ENCODE measurements at regions of chr1 and their contacts with region 1.

Region 1: DNA sequence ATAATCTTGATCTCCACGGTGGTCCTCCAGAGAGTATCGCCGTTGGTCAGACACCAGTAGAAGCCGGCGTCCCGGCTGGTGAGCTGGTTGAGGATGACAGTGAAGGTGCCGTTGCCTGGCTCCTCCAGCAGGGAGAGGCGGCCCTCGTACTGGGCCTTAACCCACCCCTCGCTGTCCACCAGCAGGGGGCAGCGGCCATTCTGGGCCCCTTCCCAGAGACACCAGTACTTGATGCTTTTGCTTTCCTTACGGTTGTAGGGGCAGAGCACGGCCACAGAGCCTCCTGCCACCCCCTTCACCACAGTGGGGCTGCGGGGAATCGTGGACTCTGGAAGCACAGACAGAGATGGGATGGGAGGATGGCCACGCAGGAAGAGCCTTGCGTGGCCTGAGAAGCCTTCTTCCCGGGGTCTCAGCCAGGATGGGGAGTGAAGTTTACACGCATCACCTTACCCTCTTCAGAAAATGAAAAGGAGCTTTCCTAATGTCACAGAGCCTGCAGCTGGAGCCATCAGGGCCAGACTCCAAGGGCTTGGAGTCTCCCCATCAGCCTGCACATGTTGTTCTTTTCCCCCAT is 10.7 kb downstream of the PIGR start:
- DNase-seq: no peak
- ATAC-seq: peak; percentile 64
- H3K4me3 ChIP-seq: no peak overlapping the region
- H3K27ac ChIP-seq: no peak overlapping the region
- H3K4me1 ChIP-seq: peaks cover 27% of the 10 kb centered on the region
- H3K27me3 ChIP-seq: no peaks in the 10 kb centered on the region
- CTCF ChIP-seq: peak; percentile 44 to 71 (median 57)
- EP300 ChIP-seq: no peak
- POLR2A ChIP-seq: no peak
- RAD21 ChIP-seq: peak; percentile 36; the same call in 1 of the 2 replicates

Region 2: GRCh38 chr1:206489980-206490770 is 445.4 kb before region 1 on chr1:
- CTCF ChIA-PET with region 1: no interaction called
- POLR2A ChIA-PET with region 1: no interaction called
- RAD21 ChIA-PET with region 1: no interaction called
- SMC1A ChIA-PET with region 1: no interaction called
- in situ Hi-C with region 1: no loop called
- intact Hi-C with region 1: no loop called
- DNase-seq: no peak
- ATAC-seq: peak; percentile 99
- H3K4me3 ChIP-seq: no peak overlapping the region
- H3K27ac ChIP-seq: no peak overlapping the region
- H3K4me1 ChIP-seq: peaks cover 5% of the 10 kb centered on the region
- H3K27me3 ChIP-seq: no peaks in the 10 kb centered on the region
- CTCF ChIP-seq: peak; percentile 91 to 97 (median 96)
- EP300 ChIP-seq: no peak
- POLR2A ChIP-seq: no peak
- RAD21 ChIP-seq: peak; percentile 97

Region 3: GRCh38 chr1:206635080-206635977 is 300.2 kb before region 1 on chr1 and contains the start of gene DYRK3:
- CTCF ChIA-PET with region 1: interaction called, 9 read pairs
- POLR2A ChIA-PET with region 1: no interaction called
- RAD21 ChIA-PET with region 1: interaction called, 12 read pairs
- SMC1A ChIA-PET with region 1: interaction called, 3 read pairs
- in situ Hi-C with region 1: no loop called
- intact Hi-C with region 1: no loop called
- DNase-seq: peak; percentile 71
- ATAC-seq: peak; percentile 92
- H3K4me3 ChIP-seq: peak within 1 kb of the TSS; percentile 94
- H3K27ac ChIP-seq: peak within 1 kb of the TSS; percentile 62
- H3K4me1 ChIP-seq: peaks cover 26% of the 10 kb centered on the region
- H3K27me3 ChIP-seq: no peaks in the 10 kb centered on the region
- CTCF ChIP-seq: 0 out of 6 replicates have a peak, but pooled peaks of 1 of the 3 experiments have one; percentile 5
- EP300 ChIP-seq: 0 out of 4 replicates have a peak, but pooled peaks of 1 of the 2 experiments have one; percentile 17
- POLR2A ChIP-seq: peak; percentile 94
- RAD21 ChIP-seq: no peak
- polyA plus RNA-seq, gene DYRK3: 1.6 to 2.8 TPM

Region 4: DNA sequence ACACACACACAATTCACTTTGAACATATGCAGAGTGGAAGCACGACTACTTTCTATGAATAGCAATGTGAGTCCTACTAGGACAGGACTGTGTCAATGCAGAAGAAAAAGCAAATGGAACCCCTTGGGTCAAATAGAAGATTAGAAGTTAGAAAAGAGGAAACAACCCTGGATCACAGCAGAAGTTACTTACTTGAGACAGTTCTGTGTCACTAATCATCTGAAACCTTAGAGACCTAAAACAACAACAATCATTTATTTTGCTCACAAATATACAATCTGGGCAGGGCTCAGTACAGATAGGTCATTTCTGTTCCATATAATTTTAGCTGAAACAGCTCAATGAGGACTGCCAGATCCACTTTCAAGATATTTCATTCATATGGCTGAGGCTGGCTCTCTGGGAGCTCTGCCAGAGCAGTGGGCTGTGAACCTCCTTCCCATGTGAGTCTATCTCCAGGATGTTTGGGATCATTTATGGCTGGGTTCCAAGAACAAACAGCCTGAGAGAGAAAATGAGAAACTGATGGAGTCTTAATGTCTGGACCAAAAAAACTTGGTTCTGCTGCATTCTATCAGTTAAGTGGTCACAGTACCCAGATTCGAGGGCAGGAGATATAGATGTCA is 120.8 kb before region 1 on chr1:
- CTCF ChIA-PET with region 1: interaction called, 131 read pairs
- POLR2A ChIA-PET with region 1: no interaction called
- RAD21 ChIA-PET with region 1: interaction called, 22 read pairs
- SMC1A ChIA-PET with region 1: interaction called, 85 read pairs
- in situ Hi-C with region 1: no loop called
- intact Hi-C with region 1: no loop called
- DNase-seq: no peak
- ATAC-seq: peak; percentile 42
- H3K4me3 ChIP-seq: no peak overlapping the region
- H3K27ac ChIP-seq: no peak overlapping the region; the same call in 1 of the 2 replicates
- H3K4me1 ChIP-seq: peaks cover 27% of the 10 kb centered on the region
- H3K27me3 ChIP-seq: no peaks in the 10 kb centered on the region
- CTCF ChIP-seq: no peak
- EP300 ChIP-seq: no peak
- POLR2A ChIP-seq: no peak
- RAD21 ChIP-seq: no peak

Region 5: DNA sequence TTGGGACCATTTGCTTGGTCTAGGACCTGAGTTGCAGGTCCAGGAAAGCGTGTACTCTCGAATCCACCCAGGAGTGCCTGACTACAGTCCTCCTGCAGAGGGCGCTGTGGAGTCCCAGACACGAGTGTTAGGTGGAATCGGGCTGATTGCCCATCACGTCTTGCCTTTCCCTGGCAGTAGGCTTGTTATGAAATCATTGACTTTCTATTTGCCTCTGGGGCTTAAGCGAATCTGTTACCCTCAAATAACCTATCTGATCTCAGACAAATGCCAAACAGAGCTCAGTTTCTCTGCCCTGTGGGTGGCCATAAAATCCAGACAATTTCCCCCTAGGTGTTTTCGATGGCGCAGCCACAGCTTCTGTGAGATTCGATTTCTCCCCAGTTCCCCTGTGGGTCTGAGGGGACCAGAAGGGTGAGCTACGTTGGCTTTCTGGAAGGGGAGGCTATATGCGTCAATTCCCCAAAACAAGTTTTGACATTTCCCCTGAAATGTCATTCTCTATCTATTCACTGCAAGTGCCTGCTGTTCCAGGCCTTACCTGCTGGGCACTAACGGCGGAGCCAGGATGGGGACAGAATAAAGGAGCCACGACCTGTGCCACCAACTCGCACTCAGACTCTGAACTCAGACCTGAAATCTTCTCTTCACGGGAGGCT is 70.4 kb before region 1 on chr1 and contains the start of gene IL20:
- CTCF ChIA-PET with region 1: interaction called, 38 read pairs
- POLR2A ChIA-PET with region 1: interaction called, 3 read pairs
- RAD21 ChIA-PET with region 1: interaction called, 6 read pairs
- SMC1A ChIA-PET with region 1: interaction called, 13 read pairs
- in situ Hi-C with region 1: no loop called
- intact Hi-C with region 1: loop called (anchors 1 kb)
- DNase-seq: peak; percentile 31
- ATAC-seq: peak; percentile 95
- H3K4me3 ChIP-seq: no peak within 1 kb of the TSS
- H3K27ac ChIP-seq: no peak within 1 kb of the TSS
- H3K4me1 ChIP-seq: no peaks in the 10 kb centered on the region
- H3K27me3 ChIP-seq: peaks cover 0 to 2% of the 10 kb centered on the region in 2 experiments; a peak in 1 of 4 replicates
- CTCF ChIP-seq: peak; percentile 81 to 95 (median 93)
- EP300 ChIP-seq: no peak
- POLR2A ChIP-seq: no peak
- RAD21 ChIP-seq: peak; percentile 69
- polyA plus RNA-seq, gene IL20: 0.08 TPM in 1 of 2 experiments, not detected in the other

Region 6: GRCh38 chr1:206925106-206925736 is 10.4 kb before region 1 on chr1:
- CTCF ChIA-PET with region 1: interaction called, 643 read pairs
- POLR2A ChIA-PET with region 1: interaction called, 222 read pairs
- RAD21 ChIA-PET with region 1: interaction called, 371 read pairs
- SMC1A ChIA-PET with region 1: interaction called, 431 read pairs
- in situ Hi-C with region 1: no loop called
- intact Hi-C with region 1: no loop called
- DNase-seq: peak; percentile 91
- ATAC-seq: peak; percentile 72
- H3K4me3 ChIP-seq: no peak overlapping the region; the same call in 1 of the 2 replicates
- H3K27ac ChIP-seq: peak overlapping the region; percentile 99
- H3K4me1 ChIP-seq: peaks cover 51% of the 10 kb centered on the region
- H3K27me3 ChIP-seq: no peaks in the 10 kb centered on the region
- CTCF ChIP-seq: peak in 1 of 3 experiments; percentile 29; a peak in 1 of 6 replicates
- EP300 ChIP-seq: no peak; a peak in 1 of 4 replicates
- POLR2A ChIP-seq: no peak
- RAD21 ChIP-seq: peak; percentile 56

Region 7: GRCh38 chr1:206955476-206956451 is 20.2 kb after region 1 on chr1:
- CTCF ChIA-PET with region 1: interaction called, 44 read pairs
- POLR2A ChIA-PET with region 1: interaction called, 13 read pairs
- RAD21 ChIA-PET with region 1: interaction called, 9 read pairs
- SMC1A ChIA-PET with region 1: interaction called, 15 read pairs
- in situ Hi-C with region 1: no loop called
- intact Hi-C with region 1: no loop called
- DNase-seq: no peak
- ATAC-seq: peak; percentile 78
- H3K4me3 ChIP-seq: no peak overlapping the region
- H3K27ac ChIP-seq: peak overlapping the region; percentile 38
- H3K4me1 ChIP-seq: peaks cover 44% of the 10 kb centered on the region
- H3K27me3 ChIP-seq: no peaks in the 10 kb centered on the region
- CTCF ChIP-seq: no peak
- EP300 ChIP-seq: no peak
- POLR2A ChIP-seq: no peak
- RAD21 ChIP-seq: 0 out of 2 replicates have a peak, but pooled peaks have one; percentile 2

Region 8: GRCh38 chr1:207052911-207053769 is 117.6 kb after region 1 on chr1 and contains the start of gene PFKFB2:
- CTCF ChIA-PET with region 1: no interaction called
- POLR2A ChIA-PET with region 1: no interaction called
- RAD21 ChIA-PET with region 1: no interaction called
- SMC1A ChIA-PET with region 1: interaction called, 3 read pairs
- in situ Hi-C with region 1: no loop called
- intact Hi-C with region 1: loop called (anchors 5 kb)
- DNase-seq: peak; percentile 66
- ATAC-seq: peak; percentile 87
- H3K4me3 ChIP-seq: peak within 1 kb of the TSS; percentile 82
- H3K27ac ChIP-seq: peak within 1 kb of the TSS; percentile 31; the same call in 1 of the 2 replicates
- H3K4me1 ChIP-seq: peaks cover 21% of the 10 kb centered on the region
- H3K27me3 ChIP-seq: no peaks in the 10 kb centered on the region
- CTCF ChIP-seq: peak in 2 of 3 experiments; percentile 18 to 31; a peak in 2 of 6 replicates
- EP300 ChIP-seq: no peak
- POLR2A ChIP-seq: peak; percentile 82
- RAD21 ChIP-seq: no peak
- polyA plus RNA-seq, gene PFKFB2: 0.40 to 0.47 TPM

Measured in GM12878 (cell line).